Left ventricle myocardium superior (tissue), 1 donor: ENCODE measurements at regions of chr14 and their contacts with region 1.

Region 1: DNA sequence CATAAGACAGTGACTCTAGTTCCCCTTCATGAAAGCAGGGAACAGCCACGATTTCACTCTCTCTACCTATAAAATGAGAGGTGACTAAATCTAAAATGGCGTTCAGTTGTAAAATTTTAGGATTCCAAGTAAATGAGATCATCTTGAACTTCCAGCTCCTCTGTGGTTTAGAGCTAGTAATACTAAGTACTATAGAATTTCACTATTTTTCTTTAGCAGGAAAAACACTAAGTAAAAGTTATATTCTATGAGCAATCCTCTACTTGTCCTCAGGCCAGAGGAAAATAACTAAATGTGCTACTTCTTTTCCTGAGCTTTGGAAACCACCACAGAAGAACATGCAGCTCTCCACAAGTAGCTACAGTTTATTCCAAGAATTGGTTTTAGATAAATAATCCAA is 55.6 kb downstream of the NIN start:
- DNase-seq: no peak
- ATAC-seq: no peak

Region 2: GRCh38 chr14:50599700-50600444 is 175.5 kb before region 1 on chr14:
- intact Hi-C with region 1: loop called (anchors 5 kb)
- DNase-seq: no peak
- ATAC-seq: peak; percentile 54

Region 3: GRCh38 chr14:50860478-50861086 is 85.2 kb after region 1 on chr14:
- intact Hi-C with region 1: loop called (anchors 1 kb)
- DNase-seq: peak; percentile 79
- ATAC-seq: peak; percentile 86